ENCODE measurements at regions of chr4 and their contacts with region 1.

Region 1: GRCh38 chr4:103019308-103020124 is at the start of gene SLC9B1:
- DNase-seq: peak; percentile 84
- CTCF ChIP-seq: no peak

Region 2: DNA sequence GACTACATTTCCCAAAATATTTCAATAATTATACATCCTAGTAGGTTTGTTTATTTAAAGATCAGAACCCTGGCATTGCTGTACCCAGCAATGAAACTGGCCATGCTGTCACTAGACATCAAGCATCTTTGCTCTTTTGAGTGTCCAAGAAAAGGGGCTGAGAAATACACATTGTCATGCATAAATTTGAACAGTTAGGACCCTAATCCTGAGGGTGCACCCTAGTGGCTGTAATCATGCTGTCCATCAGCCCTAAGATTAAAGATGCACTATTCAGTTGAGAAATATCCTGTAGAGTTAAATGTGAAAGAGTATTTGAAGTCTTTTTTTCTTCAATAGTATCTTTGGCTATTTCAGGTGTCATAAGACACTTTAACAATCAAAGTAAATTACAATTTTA is 409.5 kb before region 1 on chr4:
- in situ Hi-C with region 1: loop called (anchors 10 kb)
- DNase-seq: peak; percentile 29
- CTCF ChIP-seq: peak; percentile 53

Region 3: GRCh38 chr4:102627831-102628523 is 391.5 kb before region 1 on chr4:
- in situ Hi-C with region 1: no loop called
- DNase-seq: peak; percentile 23
- CTCF ChIP-seq: no peak

Region 4: DNA sequence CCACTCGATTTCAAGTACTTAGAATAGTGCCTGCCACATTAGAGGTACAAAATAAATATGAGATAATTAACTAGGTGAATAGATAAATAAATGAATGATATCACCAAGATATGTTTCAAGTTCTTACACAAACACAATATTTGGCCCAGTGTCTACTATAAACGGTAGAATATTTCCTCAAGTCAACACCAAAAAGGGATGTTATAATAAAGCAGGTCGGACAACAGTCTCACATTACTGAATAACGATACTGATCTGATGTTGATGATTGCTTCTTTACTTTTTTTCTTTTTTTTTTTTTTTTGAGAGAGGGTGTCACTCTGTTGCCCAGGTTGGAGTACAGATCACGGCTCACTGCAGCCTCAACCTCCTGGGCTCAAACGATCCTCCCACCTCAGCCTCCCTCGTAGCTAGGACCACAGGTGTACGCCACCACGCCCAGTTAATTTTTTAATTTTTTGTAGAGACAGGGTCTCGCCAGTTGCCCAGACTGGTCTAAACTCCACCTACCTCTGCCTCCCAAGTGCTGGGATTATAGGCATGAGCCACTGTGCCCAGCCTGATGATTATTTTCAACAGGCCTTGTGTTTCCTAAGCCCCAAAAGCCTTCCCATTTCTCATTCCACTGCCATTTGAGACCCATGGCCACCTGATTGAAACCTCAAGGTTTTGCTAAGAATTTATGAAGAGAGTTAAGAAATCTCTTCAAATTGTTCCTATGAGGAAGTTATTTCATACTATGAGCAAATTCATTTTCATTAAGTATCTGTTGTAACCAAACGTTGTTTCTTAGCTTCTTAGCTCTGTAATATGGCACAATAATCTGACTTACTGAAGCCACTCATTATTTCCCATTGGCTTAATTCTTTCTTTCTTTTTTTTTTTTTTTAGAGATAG is 261.0 kb before region 1 on chr4:
- in situ Hi-C with region 1: no loop called
- DNase-seq: no peak
- CTCF ChIP-seq: no peak

Region 5: DNA sequence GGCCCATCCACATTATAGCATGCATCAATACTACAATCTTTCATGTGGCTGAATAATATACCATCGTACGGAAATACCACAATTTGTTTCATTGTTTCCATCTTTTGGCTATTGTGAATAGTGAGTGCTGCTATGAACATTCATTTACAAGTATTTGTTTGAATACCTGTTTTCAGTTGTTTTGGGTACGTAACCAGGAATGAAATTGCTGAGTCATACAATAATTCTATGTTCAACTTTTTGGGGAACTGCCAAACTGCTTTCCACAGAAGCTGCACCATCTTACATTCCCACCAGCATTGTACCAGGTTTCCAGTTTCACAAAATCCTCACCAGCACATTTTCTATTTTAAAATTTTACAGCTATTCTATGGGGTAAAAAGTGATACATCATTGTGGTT is 230.2 kb before region 1 on chr4:
- in situ Hi-C with region 1: no loop called
- DNase-seq: no peak
- CTCF ChIP-seq: no peak

Region 6: DNA sequence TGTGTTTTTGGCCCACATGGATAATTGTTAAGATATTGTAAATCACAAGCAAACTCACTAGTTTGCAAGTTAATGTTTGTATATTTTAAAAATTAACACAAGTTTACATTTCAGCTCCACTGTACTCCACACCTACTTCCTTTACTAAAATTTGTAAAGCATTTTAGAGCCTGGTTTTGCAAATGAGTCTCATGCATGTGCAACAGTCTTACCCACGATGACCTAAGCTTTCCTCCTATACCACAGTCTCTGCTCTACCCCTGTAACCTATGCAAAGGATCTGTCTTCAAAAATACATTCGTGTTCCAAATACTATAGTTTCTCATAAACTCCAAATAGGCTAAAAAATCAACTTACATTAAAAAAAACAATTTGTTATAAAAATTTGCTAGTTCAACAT is 70.0 kb after region 1 on chr4:
- in situ Hi-C with region 1: loop called (anchors 10 kb)
- DNase-seq: no peak
- CTCF ChIP-seq: no peak